ENCODE measurements at regions of chr12 and their contacts with region 1.

Region 1: GRCh38 chr12:3141339-3142321 is 64.5 kb downstream of the TSPAN9 start:
- DNase-seq: no peak
- ATAC-seq: peak; percentile 55
- H3K4me3 Mint-ChIP-seq: no peak overlapping the region
- H3K27ac Mint-ChIP-seq: peak overlapping the region; percentile 54
- H3K4me1 Mint-ChIP-seq: peaks cover 37% of the 10 kb centered on the region
- H3K27me3 Mint-ChIP-seq: no peaks in the 10 kb centered on the region
- CTCF ChIP-seq: no peak

Region 2: GRCh38 chr12:3087758-3088650 is 53.6 kb before region 1 on chr12:
- CTCF ChIA-PET with region 1: no interaction called
- POLR2A ChIA-PET with region 1: no interaction called
- DNase-seq: no peak
- ATAC-seq: no peak
- H3K4me3 Mint-ChIP-seq: no peak overlapping the region
- H3K27ac Mint-ChIP-seq: peak overlapping the region; percentile 16
- H3K4me1 Mint-ChIP-seq: peaks cover 31% of the 10 kb centered on the region
- H3K27me3 Mint-ChIP-seq: no peaks in the 10 kb centered on the region
- CTCF ChIP-seq: no peak

Region 3: DNA sequence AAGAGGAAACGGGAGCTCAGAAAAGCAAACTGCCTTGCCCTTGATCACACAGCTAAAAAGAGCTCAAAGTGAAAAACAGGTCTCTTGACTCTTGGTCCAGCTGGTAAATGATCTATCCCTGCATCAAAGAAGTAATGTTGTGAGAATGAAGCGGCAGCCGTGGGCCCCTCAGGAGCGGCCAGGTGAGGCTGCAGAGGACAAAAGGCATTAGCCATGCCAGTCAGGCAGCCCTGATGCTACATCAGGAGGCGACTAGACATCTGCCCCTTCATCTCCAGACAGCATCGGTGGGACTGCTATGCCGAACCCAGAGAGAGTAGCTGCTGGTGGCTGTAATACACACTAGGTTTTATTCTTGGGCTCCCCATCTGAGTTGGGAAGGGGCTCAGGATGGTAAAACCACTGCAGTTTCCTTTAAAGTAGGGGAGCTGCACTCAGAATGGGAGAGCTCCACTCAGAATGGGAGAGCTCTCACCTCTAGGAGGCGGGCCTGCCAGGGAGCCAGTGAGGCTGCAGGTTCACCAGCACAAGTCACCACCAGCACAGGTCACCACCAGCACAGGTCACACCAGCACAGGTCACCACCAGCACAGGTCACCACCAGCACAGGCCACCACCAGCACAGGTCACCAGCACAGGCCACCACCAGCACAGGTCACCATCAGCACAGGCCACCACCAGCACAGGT is 55.6 kb after region 1 on chr12:
- CTCF ChIA-PET with region 1: interaction called, 236 read pairs
- POLR2A ChIA-PET with region 1: no interaction called
- DNase-seq: no peak
- ATAC-seq: no peak
- H3K4me3 Mint-ChIP-seq: no peak overlapping the region
- H3K27ac Mint-ChIP-seq: no peak overlapping the region
- H3K4me1 Mint-ChIP-seq: peaks cover 41% of the 10 kb centered on the region
- H3K27me3 Mint-ChIP-seq: peaks cover 31% of the 10 kb centered on the region
- CTCF ChIP-seq: no peak

Measured in WTC11 (cell line).